ENCODE measurements at regions of chr3 and their contacts with region 1.

Region 1: DNA sequence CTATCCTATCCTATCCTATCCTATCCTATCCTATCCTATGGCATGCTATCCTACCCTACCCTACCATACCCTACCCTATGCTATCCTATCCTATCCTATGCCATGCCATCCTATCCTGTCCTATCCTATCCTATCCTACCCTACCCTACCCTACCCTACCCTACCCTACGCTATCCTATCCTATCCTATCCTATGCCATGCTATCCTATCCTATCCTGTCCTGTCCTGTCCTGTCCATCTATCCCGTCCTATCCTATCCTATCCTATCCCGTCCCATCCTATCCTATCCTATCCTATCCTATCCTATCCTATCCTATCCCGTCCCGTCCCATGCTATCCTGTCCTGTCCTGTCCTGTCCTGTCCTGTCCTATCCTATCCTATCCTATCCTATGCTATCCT is 57.4 kb downstream of the SLC6A11 start:
- DNase-seq: no peak

Region 2: GRCh38 chr3:10693460-10693859 is 180.0 kb before region 1 on chr3:
- intact Hi-C with region 1: no loop called
- DNase-seq: no peak

Region 3: DNA sequence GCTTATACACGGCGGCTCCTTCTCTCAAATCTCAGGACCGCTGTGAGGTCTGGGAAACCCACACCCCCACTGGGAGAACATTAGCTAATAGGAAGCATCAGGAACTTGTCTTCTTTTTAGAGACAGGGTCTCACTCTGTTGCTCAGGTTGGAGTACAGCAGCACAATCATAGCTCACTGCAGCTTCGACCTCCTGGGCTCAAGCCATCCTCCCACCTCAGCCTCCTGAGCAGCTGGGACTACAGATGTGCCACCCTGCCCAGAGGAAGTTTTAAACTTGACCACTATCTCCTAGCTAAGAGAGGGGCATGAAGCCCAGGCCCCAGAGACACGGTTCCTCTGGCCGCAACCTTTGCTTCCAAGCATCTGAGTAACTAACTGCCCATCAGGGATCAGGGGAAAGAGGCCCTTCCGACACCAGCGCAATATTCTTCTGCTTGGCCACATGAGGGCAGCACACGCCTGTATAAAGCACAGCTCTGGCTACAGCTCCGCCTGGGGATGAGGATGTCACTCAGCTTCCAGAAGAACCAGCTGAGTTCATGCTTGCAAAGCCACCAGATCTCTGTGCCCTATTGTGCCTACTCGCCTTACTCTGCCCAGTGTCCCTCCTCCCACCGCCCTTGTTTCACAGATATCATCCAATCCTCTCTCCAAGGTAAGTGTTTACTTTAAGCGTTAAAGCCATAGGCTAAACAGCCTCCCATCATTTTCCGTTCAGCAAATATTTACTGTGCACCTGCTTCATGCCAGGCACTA is 114.9 kb before region 1 on chr3:
- intact Hi-C with region 1: no loop called
- DNase-seq: no peak

Region 4: GRCh38 chr3:12303534-12303933 is 1430.1 kb after region 1 on chr3:
- intact Hi-C with region 1: loop called in 1 of 2 experiments (anchors 5 kb)
- DNase-seq: no peak